B cell (primary cell): ENCODE measurements at regions of chr15 and their contacts with region 1.

Region 1: GRCh38 chr15:74373731-74374647 is 6.5 kb upstream of the CYP11A1 start:
- DNase-seq: peak; percentile 97
- ATAC-seq: peak; percentile 95
- H3K4me3 ChIP-seq: peak overlapping the region; percentile 8 to 80 (median 77)
- H3K4me3 Mint-ChIP-seq: peak overlapping the region; percentile 60
- H3K27ac ChIP-seq: peak overlapping the region; percentile 38 to 60
- H3K27ac Mint-ChIP-seq: peak overlapping the region; percentile 72
- H3K4me1 ChIP-seq: peaks cover 11 to 20% of the 10 kb centered on the region in 2 donors
- H3K4me1 Mint-ChIP-seq: peaks cover 16% of the 10 kb centered on the region
- H3K27me3 ChIP-seq: no peaks in the 10 kb centered on the region
- H3K27me3 Mint-ChIP-seq: peaks cover 13% of the 10 kb centered on the region
- CTCF ChIP-seq: peak; percentile 95

Region 2: GRCh38 chr15:74340139-74340538 is 33.9 kb before region 1 on chr15:
- CTCF ChIA-PET with region 1: no interaction called
- POLR2A ChIA-PET with region 1: no interaction called
- intact Hi-C with region 1: no loop called
- DNase-seq: no peak
- ATAC-seq: no peak
- H3K4me3 ChIP-seq: no peak overlapping the region
- H3K4me3 Mint-ChIP-seq: no peak overlapping the region
- H3K27ac ChIP-seq: no peak overlapping the region
- H3K27ac Mint-ChIP-seq: no peak overlapping the region
- H3K4me1 ChIP-seq: no peaks in the 10 kb centered on the region
- H3K4me1 Mint-ChIP-seq: no peaks in the 10 kb centered on the region
- H3K27me3 ChIP-seq: no peaks in the 10 kb centered on the region
- H3K27me3 Mint-ChIP-seq: peaks cover 20% of the 10 kb centered on the region
- CTCF ChIP-seq: no peak

Region 3: GRCh38 chr15:74438721-74439316 is 64.8 kb after region 1 on chr15:
- CTCF ChIA-PET with region 1: interaction called, 855 read pairs
- POLR2A ChIA-PET with region 1: interaction called, 12 read pairs
- intact Hi-C with region 1: loop called (anchors 1 kb)
- DNase-seq: peak; percentile 88
- ATAC-seq: peak; percentile 44
- H3K4me3 ChIP-seq: no peak overlapping the region
- H3K4me3 Mint-ChIP-seq: no peak overlapping the region
- H3K27ac ChIP-seq: no peak overlapping the region
- H3K27ac Mint-ChIP-seq: peak overlapping the region; percentile 0
- H3K4me1 ChIP-seq: peaks cover 17 to 27% of the 10 kb centered on the region in 2 donors
- H3K4me1 Mint-ChIP-seq: peaks cover 36% of the 10 kb centered on the region
- H3K27me3 ChIP-seq: no peaks in the 10 kb centered on the region
- H3K27me3 Mint-ChIP-seq: no peaks in the 10 kb centered on the region
- CTCF ChIP-seq: peak; percentile 90

Region 4: GRCh38 chr15:74489518-74490338 is 115.7 kb after region 1 on chr15:
- CTCF ChIA-PET with region 1: interaction called, 44 read pairs
- POLR2A ChIA-PET with region 1: no interaction called
- intact Hi-C with region 1: loop called (anchors 1 kb)
- DNase-seq: peak; percentile 82
- ATAC-seq: peak; percentile 96
- H3K4me3 ChIP-seq: no peak overlapping the region
- H3K4me3 Mint-ChIP-seq: peak overlapping the region; percentile 13
- H3K27ac ChIP-seq: no peak overlapping the region
- H3K27ac Mint-ChIP-seq: no peak overlapping the region
- H3K4me1 ChIP-seq: peaks cover 10% of the 10 kb centered on the region in 2 donors
- H3K4me1 Mint-ChIP-seq: peaks cover 11% of the 10 kb centered on the region
- H3K27me3 ChIP-seq: no peaks in the 10 kb centered on the region
- H3K27me3 Mint-ChIP-seq: no peaks in the 10 kb centered on the region
- CTCF ChIP-seq: peak; percentile 78

Region 5: DNA sequence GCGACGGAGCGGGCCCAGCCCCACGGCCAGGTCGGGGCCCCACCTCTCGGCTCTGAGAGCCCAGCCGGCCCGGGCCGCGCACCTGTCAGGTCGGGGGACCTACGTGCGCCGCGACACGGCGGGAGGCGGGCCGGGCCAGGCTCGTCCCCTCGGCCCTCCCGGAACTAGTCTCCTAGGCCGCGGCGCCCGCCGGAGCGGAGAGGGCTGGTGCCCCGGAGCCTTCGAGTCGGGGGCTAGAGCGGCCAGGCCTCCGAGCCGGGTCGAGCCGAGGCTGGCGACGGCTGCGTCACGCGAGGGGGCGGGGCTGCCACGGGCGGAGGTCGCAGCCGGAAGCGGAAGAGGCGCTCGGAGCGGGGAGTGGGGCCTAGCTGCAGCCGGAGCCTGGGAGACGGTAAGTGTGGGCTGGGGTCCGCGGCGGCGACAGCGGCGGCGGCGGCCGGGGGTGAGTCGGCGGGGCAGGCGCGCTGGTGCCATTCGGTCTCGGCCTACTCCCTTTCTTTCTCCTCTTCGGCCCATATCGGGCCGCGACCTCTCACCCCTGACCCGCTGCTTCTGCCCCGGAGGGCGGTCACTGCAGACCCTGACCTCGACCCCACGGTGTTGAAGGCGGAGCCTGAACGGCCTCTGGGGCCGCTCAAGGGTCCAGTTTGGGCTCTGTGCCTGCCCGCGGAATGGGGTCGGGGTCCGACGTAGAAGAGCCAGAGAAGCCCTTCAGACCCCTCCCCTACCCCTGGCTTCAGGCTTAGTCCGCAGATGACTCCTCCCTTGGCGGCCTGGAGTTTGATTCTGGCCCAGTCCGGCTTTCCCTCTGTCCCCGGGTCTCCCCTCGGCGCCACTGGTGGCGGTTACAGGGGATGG is 241.7 kb after region 1 on chr15 and contains the start of gene CLK3:
- CTCF ChIA-PET with region 1: interaction called, 3 read pairs
- POLR2A ChIA-PET with region 1: no interaction called
- intact Hi-C with region 1: loop called (anchors 1 kb)
- DNase-seq: peak; percentile 96
- ATAC-seq: peak; percentile 80
- H3K4me3 ChIP-seq: peak within 1 kb of the TSS; percentile 50 to 100 (median 100)
- H3K4me3 Mint-ChIP-seq: peak within 1 kb of the TSS; percentile 92
- H3K27ac ChIP-seq: peak within 1 kb of the TSS; percentile 99
- H3K27ac Mint-ChIP-seq: peak within 1 kb of the TSS; percentile 97
- H3K4me1 ChIP-seq: peaks cover 18 to 39% of the 10 kb centered on the region in 2 donors
- H3K4me1 Mint-ChIP-seq: peaks cover 37% of the 10 kb centered on the region
- H3K27me3 ChIP-seq: no peaks in the 10 kb centered on the region
- H3K27me3 Mint-ChIP-seq: no peaks in the 10 kb centered on the region
- CTCF ChIP-seq: no peak
- total RNA-seq, gene CLK3: 164 and 176 TPM in 2 replicates

Region 6: GRCh38 chr15:74787251-74788041 is 413.5 kb after region 1 on chr15:
- CTCF ChIA-PET with region 1: interaction called, 3 read pairs
- POLR2A ChIA-PET with region 1: interaction called, 5 read pairs
- intact Hi-C with region 1: loop called (anchors 5 kb)
- DNase-seq: peak; percentile 98
- ATAC-seq: peak; percentile 57
- H3K4me3 ChIP-seq: peak overlapping the region; percentile 67 to 99 (median 86)
- H3K4me3 Mint-ChIP-seq: peak overlapping the region; percentile 93
- H3K27ac ChIP-seq: peak overlapping the region; percentile 90 to 93
- H3K27ac Mint-ChIP-seq: peak overlapping the region; percentile 99
- H3K4me1 ChIP-seq: peaks cover 61 to 91% of the 10 kb centered on the region in 2 donors
- H3K4me1 Mint-ChIP-seq: peaks cover 94% of the 10 kb centered on the region
- H3K27me3 ChIP-seq: no peaks in the 10 kb centered on the region
- H3K27me3 Mint-ChIP-seq: no peaks in the 10 kb centered on the region
- CTCF ChIP-seq: peak; percentile 75

Region 7: GRCh38 chr15:75738647-75739331 is 1364.8 kb after region 1 on chr15:
- CTCF ChIA-PET with region 1: no interaction called
- POLR2A ChIA-PET with region 1: no interaction called
- intact Hi-C with region 1: loop called (anchors 10 kb)
- DNase-seq: peak; percentile 95
- ATAC-seq: peak; percentile 98
- H3K4me3 ChIP-seq: peak overlapping the region in 4 of 5 experiments; percentile 77 to 86 (median 82)
- H3K4me3 Mint-ChIP-seq: peak overlapping the region; percentile 90
- H3K27ac ChIP-seq: peak overlapping the region; percentile 54 to 72
- H3K27ac Mint-ChIP-seq: peak overlapping the region; percentile 67
- H3K4me1 ChIP-seq: peaks cover 6 to 17% of the 10 kb centered on the region in 2 donors
- H3K4me1 Mint-ChIP-seq: peaks cover 14% of the 10 kb centered on the region
- H3K27me3 ChIP-seq: peaks cover 0 to 7% (median 0%) of the 10 kb centered on the region in 4 experiments
- H3K27me3 Mint-ChIP-seq: peaks cover 11% of the 10 kb centered on the region
- CTCF ChIP-seq: no peak